Mammary epithelial cell (primary cell): ENCODE measurements at regions of chr1 and their contacts with region 1.

Region 1: GRCh38 chr1:17274186-17275170 is 25.6 kb downstream of the PADI3 start:
- DNase-seq: peak; percentile 39
- H3K4me3 ChIP-seq: no peak overlapping the region
- H3K27ac ChIP-seq: no peak overlapping the region
- H3K4me1 ChIP-seq: peaks cover 10% of the 10 kb centered on the region
- H3K27me3 ChIP-seq: no peaks in the 10 kb centered on the region
- CTCF ChIP-seq: peak; percentile 63 to 77

Region 2: DNA sequence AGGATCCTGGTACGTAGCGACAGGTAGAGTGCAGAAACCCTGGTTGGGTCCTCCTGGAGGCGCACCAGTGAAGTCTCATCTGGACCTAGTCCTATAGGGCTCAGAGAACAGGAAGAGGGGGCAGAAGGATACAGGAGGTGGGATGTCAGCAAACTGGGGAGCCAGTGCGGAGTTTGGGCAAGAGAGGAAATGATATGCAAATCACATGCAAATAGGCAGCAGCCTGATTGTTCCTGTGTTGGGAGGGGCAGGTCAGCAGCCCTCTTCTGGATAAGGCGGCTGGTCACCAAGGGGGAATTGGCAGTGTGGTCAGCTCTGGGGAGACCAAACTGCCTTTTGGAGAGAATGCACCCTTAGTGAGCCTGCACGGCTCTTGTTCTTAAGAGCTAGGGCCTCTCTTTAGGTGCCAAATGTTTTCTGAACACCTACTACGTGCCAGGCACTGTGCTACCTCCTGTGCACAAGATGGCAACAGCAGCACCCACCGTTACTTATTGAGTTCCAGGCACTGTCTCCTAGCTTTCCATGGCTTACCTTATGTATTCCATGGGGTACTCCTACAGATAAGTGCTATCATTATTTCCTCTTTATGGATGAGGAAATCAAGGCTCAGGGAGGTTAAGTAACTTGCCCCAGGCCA is 43.7 kb before region 1 on chr1:
- CTCF ChIA-PET with region 1: no interaction called
- dilution Hi-C with region 1: no loop called
- in situ Hi-C with region 1: no loop called
- intact Hi-C with region 1: no loop called
- DNase-seq: no peak
- H3K4me3 ChIP-seq: no peak overlapping the region
- H3K27ac ChIP-seq: no peak overlapping the region
- H3K4me1 ChIP-seq: peaks cover 46% of the 10 kb centered on the region
- H3K27me3 ChIP-seq: no peaks in the 10 kb centered on the region
- CTCF ChIP-seq: no peak

Region 3: GRCh38 chr1:17405898-17406759 is 131.7 kb after region 1 on chr1:
- CTCF ChIA-PET with region 1: interaction called, 4 read pairs
- dilution Hi-C with region 1: loop called (anchors 5 kb)
- in situ Hi-C with region 1: no loop called
- intact Hi-C with region 1: no loop called
- DNase-seq: peak; percentile 32
- H3K4me3 ChIP-seq: no peak overlapping the region
- H3K27ac ChIP-seq: no peak overlapping the region
- H3K4me1 ChIP-seq: peaks cover 19% of the 10 kb centered on the region
- H3K27me3 ChIP-seq: no peaks in the 10 kb centered on the region
- CTCF ChIP-seq: peak; percentile 79 to 83